ENCODE measurements at regions of chr13 and their contacts with region 1.

Region 1: DNA sequence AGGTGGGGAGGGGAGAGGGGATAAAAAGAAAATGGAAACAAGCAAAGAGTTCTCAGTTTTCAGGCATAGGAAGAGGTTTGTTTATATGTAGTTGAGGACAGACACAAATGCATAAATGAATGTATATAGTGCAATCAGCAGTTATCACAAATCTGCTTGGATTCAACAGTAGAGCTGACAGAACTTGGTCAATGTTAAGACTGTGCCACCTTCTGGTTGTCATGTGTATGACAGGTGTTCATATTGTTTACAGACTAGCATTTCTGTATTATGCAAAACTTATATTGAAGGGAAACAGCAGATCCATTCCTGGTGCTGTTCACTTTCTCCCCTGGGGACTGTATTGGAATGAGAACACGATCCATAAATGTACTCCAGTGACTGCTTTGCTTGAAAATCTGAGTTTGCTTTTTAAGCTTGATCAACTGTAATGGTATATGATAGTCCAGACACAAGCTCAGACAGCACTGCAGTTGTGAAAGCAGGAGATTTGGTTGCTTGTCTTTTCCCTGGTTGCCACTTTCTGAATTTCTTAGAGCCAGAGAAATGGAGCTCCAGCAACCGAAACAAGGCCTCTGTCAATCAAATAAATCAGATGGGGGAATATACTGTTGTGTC is 319.5 kb upstream of the OBI1 start:
- DNase-seq: peak in 1 of 3 donors; percentile 81
- ATAC-seq: peak; percentile 72
- H3K4me3 ChIP-seq: no peak overlapping the region
- H3K4me1 ChIP-seq: no peaks in the 10 kb centered on the region
- CTCF ChIP-seq: peak; percentile 46

Region 2: GRCh38 chr13:78137404-78138142 is 840.9 kb before region 1 on chr13:
- intact Hi-C with region 1: loop called (anchors 5 to 10 kb)
- DNase-seq: peak in 2 of 3 donors; percentile 12 to 32
- ATAC-seq: peak; percentile 75
- H3K4me3 ChIP-seq: no peak overlapping the region
- H3K4me1 ChIP-seq: peaks cover 4% of the 10 kb centered on the region
- CTCF ChIP-seq: no peak

Region 3: GRCh38 chr13:79581870-79582315 is 603.4 kb after region 1 on chr13:
- intact Hi-C with region 1: no loop called
- DNase-seq: peak in 1 of 3 donors; percentile 37
- ATAC-seq: no peak
- H3K4me3 ChIP-seq: no peak overlapping the region
- H3K4me1 ChIP-seq: no peaks in the 10 kb centered on the region
- CTCF ChIP-seq: no peak